ENCODE measurements at regions of chr1 and their contacts with region 1.

Region 1: DNA sequence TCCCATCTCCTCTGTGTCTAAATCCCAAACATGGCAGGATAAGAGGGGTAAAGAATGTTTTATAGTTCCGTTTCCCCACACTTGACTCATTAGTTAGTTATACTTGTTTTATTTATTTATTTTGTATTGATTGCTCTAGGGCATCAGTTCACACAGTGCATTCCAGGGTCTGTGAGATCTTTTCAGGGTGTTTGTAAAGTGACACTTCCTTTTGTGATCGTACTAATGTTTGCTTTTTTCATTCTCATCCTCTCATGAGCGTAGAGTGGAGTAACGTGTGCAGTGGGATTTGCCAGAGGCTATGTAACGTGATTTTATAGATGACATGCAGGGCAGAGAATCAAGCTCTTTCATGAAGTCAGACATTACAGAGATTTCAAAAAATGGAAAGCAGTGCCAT is 103.2 kb downstream of the SCCPDH start:
- DNase-seq: no peak
- ATAC-seq: no peak
- H3K4me3 ChIP-seq: no peak overlapping the region
- H3K27ac ChIP-seq: no peak overlapping the region
- H3K4me1 ChIP-seq: no peaks in the 10 kb centered on the region
- H3K27me3 ChIP-seq: no peaks in the 10 kb centered on the region

Region 2: GRCh38 chr1:247316590-247317197 is 489.3 kb after region 1 on chr1:
- intact Hi-C with region 1: loop called in 1 of 2 experiments (anchors 5 kb)
- DNase-seq: peak in 1 of 2 donors; percentile 33
- ATAC-seq: no peak
- H3K4me3 ChIP-seq: no peak overlapping the region
- H3K27ac ChIP-seq: no peak overlapping the region
- H3K4me1 ChIP-seq: no peaks in the 10 kb centered on the region
- H3K27me3 ChIP-seq: no peaks in the 10 kb centered on the region